Posterior cingulate gyrus (tissue), 11 donors: ENCODE measurements at regions of chr11 and their contacts with region 1.

Region 1: DNA sequence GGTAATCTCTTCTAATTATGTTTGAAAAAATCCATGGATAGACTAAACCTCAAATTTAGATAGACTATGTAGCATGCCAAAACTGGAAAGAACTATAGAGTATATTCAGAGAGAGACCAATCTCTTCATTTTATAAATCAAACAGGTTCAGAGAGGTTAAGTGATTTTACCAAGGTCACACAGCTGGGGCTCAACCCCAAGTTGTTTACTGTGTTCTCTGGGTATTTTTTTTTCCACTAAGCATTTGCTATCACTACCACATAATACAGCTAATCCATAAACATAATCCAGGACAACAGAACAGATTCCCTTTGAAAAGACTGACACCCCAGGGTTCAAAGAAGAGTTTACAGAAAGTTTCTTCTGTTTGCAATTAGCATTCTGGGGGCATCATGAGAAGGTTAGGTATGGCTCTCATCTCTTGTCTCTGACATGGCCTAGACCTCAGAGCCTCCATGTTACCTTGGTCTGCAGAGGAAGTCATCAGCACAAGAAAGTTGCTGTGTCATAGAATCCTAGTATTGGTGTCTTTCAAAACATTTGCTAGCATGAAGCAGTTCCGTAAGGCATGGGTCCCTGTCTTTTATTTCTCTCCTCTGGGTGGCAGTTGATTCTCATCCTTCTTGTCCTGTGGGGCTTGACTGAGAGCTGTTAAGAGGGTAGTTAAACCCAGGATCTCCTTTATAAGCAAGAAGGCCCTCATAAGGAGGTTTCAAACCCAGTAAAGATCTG is 94.5 kb upstream of the HSD17B12 start:
- DNase-seq: no peak

Region 2: GRCh38 chr11:43632171-43632570 is 46.1 kb after region 1 on chr11:
- intact Hi-C with region 1: loop called (anchors 5 kb)
- DNase-seq: no peak